Sciatic nerve (tissue), 2 donors: ENCODE measurements at regions of chr5 and their contacts with region 1.

Region 1: DNA sequence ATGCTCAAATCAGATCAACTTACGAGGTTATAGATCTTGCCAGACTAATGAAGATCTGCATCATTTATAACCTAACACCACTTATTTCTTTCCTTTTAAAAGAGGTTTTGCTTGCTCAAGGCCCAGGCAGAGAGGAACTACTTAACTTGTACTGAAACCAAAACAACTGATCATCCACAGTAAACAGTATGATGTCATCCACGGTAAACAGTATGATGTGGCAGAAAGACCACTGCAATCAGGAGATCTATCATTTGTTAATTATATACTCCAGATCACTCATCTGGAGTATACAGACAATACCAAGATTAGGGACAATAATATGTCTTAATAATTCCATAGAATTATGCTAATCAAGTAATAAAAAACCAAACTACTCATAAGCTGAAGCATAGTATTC is 116.8 kb downstream of the ADAMTS6 start:
- DNase-seq: no peak
- ATAC-seq: peak; percentile 25

Region 2: DNA sequence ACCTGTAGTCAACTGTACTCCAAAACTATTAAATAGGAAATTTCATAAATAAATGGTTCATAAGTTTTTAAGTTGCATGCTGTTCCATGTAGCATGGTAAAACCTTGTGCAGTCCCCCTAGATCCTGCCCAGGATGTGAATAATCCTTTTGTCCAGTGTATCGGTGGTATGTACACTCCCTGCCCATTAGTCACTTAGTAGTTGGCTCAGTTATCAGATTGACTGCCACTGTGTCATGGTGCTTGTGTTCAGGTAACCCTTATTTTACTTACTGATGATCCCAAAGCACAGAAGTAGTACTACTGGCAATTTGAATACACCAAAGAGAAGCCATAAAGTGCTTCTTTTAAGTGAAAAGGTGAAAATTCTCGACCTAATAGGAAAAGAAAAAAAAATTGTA is 1065.1 kb before region 1 on chr5:
- intact Hi-C with region 1: loop called (anchors 5 kb)
- DNase-seq: no peak
- ATAC-seq: no peak

Region 3: DNA sequence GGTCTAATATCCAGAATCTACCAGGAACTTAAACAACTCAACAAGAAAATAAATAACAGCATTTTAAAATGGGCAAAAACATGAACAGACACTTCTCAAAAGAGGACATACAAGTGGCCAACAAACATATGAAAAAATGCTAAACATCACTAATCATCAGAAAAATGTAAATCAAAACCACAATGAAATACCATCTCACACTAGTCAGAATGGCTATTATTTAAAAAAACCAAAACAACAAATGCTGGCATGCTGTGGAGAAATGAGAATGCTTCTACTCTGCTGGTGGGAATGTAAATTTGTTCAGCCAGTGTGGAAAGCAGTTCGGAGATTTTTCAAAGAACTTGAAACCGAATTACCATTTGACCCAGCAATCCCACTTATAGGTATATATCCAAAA is 53.8 kb after region 1 on chr5:
- intact Hi-C with region 1: no loop called
- DNase-seq: no peak
- ATAC-seq: no peak